Naive thymus-derived CD4-positive, alpha-beta T cell (primary cell): ENCODE measurements at regions of chr15 and their contacts with region 1.

Region 1: GRCh38 chr15:60585743-60586708 is 107.1 kb upstream of the ICE2 start:
- DNase-seq: peak in 7 of 9 donors; percentile 59 to 80 (median 76)
- ATAC-seq: peak; percentile 67
- H3K4me3 ChIP-seq: no peak overlapping the region
- H3K4me3 Mint-ChIP-seq: peak overlapping the region; percentile 66 to 88 (median 75)
- H3K27ac ChIP-seq: peak overlapping the region; percentile 25
- H3K27ac Mint-ChIP-seq: peak overlapping the region; percentile 79 to 93 (median 90)
- H3K4me1 ChIP-seq: peaks cover 65 to 83% of the 10 kb centered on the region in 2 donors
- H3K4me1 Mint-ChIP-seq: peaks cover 55 to 96% (median 87%) of the 10 kb centered on the region in 7 donors
- H3K27me3 ChIP-seq: no peaks in the 10 kb centered on the region
- H3K27me3 Mint-ChIP-seq: peaks cover 0 to 4% (median 0%) of the 10 kb centered on the region in 5 donors

Region 2: DNA sequence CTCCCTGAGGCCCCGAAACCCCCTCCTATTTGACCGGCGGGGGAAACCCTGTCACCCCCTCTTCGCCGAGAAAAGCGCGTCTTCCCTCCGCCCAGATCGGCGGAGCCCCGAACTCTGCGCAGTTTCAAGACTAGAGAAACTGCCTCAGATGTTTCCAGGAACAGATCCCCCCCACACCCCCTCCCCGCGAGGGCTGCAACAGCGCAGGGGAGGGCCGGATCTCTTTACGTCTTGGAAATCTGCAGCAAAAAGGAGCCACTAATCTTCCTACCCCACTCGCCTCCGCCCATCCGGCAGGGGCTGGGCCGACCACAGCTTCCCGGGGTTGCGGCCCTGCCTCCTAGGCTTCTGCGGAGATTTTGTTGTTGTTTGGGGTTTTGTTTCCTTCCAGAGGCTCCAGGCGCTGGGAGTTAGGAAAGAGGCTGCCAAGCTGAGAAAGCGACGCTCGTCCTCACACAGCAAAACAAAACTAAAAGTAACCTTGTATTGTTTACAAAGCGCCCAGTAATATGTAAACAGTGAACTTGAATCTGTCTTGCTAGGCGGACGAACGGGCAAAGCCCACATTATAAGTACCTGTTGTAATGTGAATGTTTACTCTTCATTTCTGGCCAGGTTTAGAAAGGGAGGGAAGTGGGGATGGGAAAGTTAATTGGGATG is 579.7 kb before region 1 on chr15:
- CTCF ChIA-PET with region 1: no interaction called
- POLR2A ChIA-PET with region 1: no interaction called
- intact Hi-C with region 1: loop called in 1 of 2 experiments (anchors 5 kb)
- DNase-seq: peak; percentile 37 to 81 (median 69)
- ATAC-seq: peak; percentile 82
- H3K4me3 ChIP-seq: peak overlapping the region; percentile 49
- H3K4me3 Mint-ChIP-seq: peak overlapping the region; percentile 80 to 97 (median 90)
- H3K27ac ChIP-seq: no peak overlapping the region
- H3K27ac Mint-ChIP-seq: peak overlapping the region; percentile 52 to 97 (median 86)
- H3K4me1 ChIP-seq: peaks cover 23 to 27% of the 10 kb centered on the region in 2 donors
- H3K4me1 Mint-ChIP-seq: peaks cover 26 to 52% (median 40%) of the 10 kb centered on the region in 7 donors
- H3K27me3 ChIP-seq: peaks cover 30 to 76% of the 10 kb centered on the region in 2 donors
- H3K27me3 Mint-ChIP-seq: peaks cover 74 to 94% (median 89%) of the 10 kb centered on the region in 5 donors

Region 3: GRCh38 chr15:60444289-60444912 is 141.6 kb before region 1 on chr15:
- CTCF ChIA-PET with region 1: no interaction called
- POLR2A ChIA-PET with region 1: no interaction called
- intact Hi-C with region 1: no loop called
- DNase-seq: no peak
- ATAC-seq: no peak
- H3K4me3 ChIP-seq: no peak overlapping the region
- H3K4me3 Mint-ChIP-seq: no peak overlapping the region
- H3K27ac ChIP-seq: no peak overlapping the region
- H3K27ac Mint-ChIP-seq: no peak overlapping the region
- H3K4me1 ChIP-seq: no peaks in the 10 kb centered on the region
- H3K4me1 Mint-ChIP-seq: peaks cover 0 to 9% (median 4%) of the 10 kb centered on the region in 7 donors
- H3K27me3 ChIP-seq: no peaks in the 10 kb centered on the region
- H3K27me3 Mint-ChIP-seq: no peaks in the 10 kb centered on the region

Region 4: GRCh38 chr15:60520825-60521368 is 65.1 kb before region 1 on chr15:
- CTCF ChIA-PET with region 1: interaction called, 25 read pairs
- POLR2A ChIA-PET with region 1: interaction called, 12 read pairs
- intact Hi-C with region 1: loop called (anchors 2 kb)
- DNase-seq: peak; percentile 50 to 75 (median 67)
- ATAC-seq: peak; percentile 94
- H3K4me3 ChIP-seq: no peak overlapping the region
- H3K4me3 Mint-ChIP-seq: peak overlapping the region in 2 of 10 donors; percentile 1 to 25
- H3K27ac ChIP-seq: no peak overlapping the region
- H3K27ac Mint-ChIP-seq: peak overlapping the region; percentile 1 to 85 (median 59)
- H3K4me1 ChIP-seq: peaks cover 7 to 13% of the 10 kb centered on the region in 2 donors
- H3K4me1 Mint-ChIP-seq: peaks cover 36 to 64% (median 63%) of the 10 kb centered on the region in 7 donors
- H3K27me3 ChIP-seq: no peaks in the 10 kb centered on the region
- H3K27me3 Mint-ChIP-seq: no peaks in the 10 kb centered on the region

Region 5: GRCh38 chr15:60573936-60574335 is 12.1 kb before region 1 on chr15:
- CTCF ChIA-PET with region 1: interaction called, 23 read pairs
- POLR2A ChIA-PET with region 1: interaction called, 40 read pairs
- intact Hi-C with region 1: loop called (anchors 2 kb)
- DNase-seq: peak in 7 of 9 donors; percentile 49 to 70 (median 51)
- ATAC-seq: peak; percentile 84
- H3K4me3 ChIP-seq: peak overlapping the region; percentile 18
- H3K4me3 Mint-ChIP-seq: peak overlapping the region; percentile 36 to 84 (median 70)
- H3K27ac ChIP-seq: peak overlapping the region; percentile 62
- H3K27ac Mint-ChIP-seq: peak overlapping the region; percentile 83 to 95 (median 90)
- H3K4me1 ChIP-seq: peaks cover 76 to 81% of the 10 kb centered on the region in 2 donors
- H3K4me1 Mint-ChIP-seq: peaks cover 69 to 99% (median 92%) of the 10 kb centered on the region in 7 donors
- H3K27me3 ChIP-seq: no peaks in the 10 kb centered on the region
- H3K27me3 Mint-ChIP-seq: no peaks in the 10 kb centered on the region

Region 6: DNA sequence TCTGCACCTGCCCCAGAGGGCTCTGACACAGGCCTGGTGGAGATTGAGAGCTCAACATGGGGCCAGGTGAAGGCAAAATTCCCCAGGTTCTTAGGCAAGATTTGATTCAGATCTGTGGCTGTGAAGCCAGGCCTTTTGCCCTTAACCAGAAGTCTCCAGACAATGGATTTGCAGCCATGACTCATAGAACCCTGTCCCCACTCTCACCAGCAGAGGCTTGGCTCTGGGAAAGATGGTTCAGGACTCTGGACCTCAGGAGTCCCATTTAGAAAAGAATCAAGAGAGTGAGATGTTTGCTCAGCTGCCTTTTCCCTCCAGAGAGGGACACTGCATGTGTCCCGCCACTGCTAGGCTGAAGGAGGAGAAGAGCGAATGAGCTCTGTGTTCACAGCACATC is 254.3 kb after region 1 on chr15:
- CTCF ChIA-PET with region 1: interaction called, 15 read pairs
- POLR2A ChIA-PET with region 1: interaction called, 24 read pairs
- intact Hi-C with region 1: loop called in 1 of 2 experiments (anchors 5 kb)
- DNase-seq: no peak
- ATAC-seq: peak; percentile 1
- H3K4me3 ChIP-seq: peak overlapping the region; percentile 51
- H3K4me3 Mint-ChIP-seq: peak overlapping the region; percentile 75 to 90 (median 82)
- H3K27ac ChIP-seq: peak overlapping the region; percentile 68
- H3K27ac Mint-ChIP-seq: peak overlapping the region; percentile 89 to 97 (median 96)
- H3K4me1 ChIP-seq: peaks cover 61 to 62% of the 10 kb centered on the region in 2 donors
- H3K4me1 Mint-ChIP-seq: peaks cover 50 to 96% (median 77%) of the 10 kb centered on the region in 7 donors
- H3K27me3 ChIP-seq: no peaks in the 10 kb centered on the region
- H3K27me3 Mint-ChIP-seq: peaks cover 0 to 9% (median 0%) of the 10 kb centered on the region in 5 donors

Region 7: GRCh38 chr15:61186905-61187741 is 601.1 kb after region 1 on chr15:
- CTCF ChIA-PET with region 1: no interaction called
- POLR2A ChIA-PET with region 1: no interaction called
- intact Hi-C with region 1: loop called in 1 of 2 experiments (anchors 10 kb)
- DNase-seq: no peak
- ATAC-seq: no peak
- H3K4me3 ChIP-seq: no peak overlapping the region
- H3K4me3 Mint-ChIP-seq: no peak overlapping the region
- H3K27ac ChIP-seq: no peak overlapping the region
- H3K27ac Mint-ChIP-seq: no peak overlapping the region
- H3K4me1 ChIP-seq: no peaks in the 10 kb centered on the region
- H3K4me1 Mint-ChIP-seq: no peaks in the 10 kb centered on the region
- H3K27me3 ChIP-seq: no peaks in the 10 kb centered on the region
- H3K27me3 Mint-ChIP-seq: peaks cover 40 to 55% (median 50%) of the 10 kb centered on the region in 5 donors